ENCODE measurements at regions of chr1 and their contacts with region 1.

Region 1: DNA sequence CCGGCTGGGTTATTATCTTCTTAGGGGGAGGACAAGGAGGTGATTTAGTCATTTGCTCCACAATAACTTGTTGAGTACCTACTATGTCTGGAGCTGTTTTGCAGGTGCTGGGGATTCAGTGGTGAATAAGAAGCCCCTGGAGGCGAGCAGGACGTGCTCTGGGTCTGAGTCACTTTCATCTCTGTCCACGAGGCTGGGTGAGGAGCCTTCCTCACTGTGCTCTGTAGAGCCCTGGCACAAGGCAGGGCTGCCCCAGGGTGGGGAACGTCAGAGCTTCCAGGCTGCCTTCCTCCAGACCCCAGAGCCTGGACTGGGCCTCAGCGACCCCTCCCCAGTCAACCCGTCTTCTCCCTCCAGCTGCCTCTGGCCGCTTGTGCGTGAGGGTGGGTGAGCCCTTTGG is 2.5 kb upstream of the PADI6 start:
- DNase-seq: no peak
- H3K4me3 ChIP-seq: no peak overlapping the region
- H3K27ac ChIP-seq: no peak overlapping the region
- H3K4me1 ChIP-seq: no peaks in the 10 kb centered on the region
- H3K27me3 ChIP-seq: no peaks in the 10 kb centered on the region
- CTCF ChIP-seq: no peak
- POLR2A ChIP-seq: no peak

Region 2: GRCh38 chr1:18175530-18176377 is 806.3 kb after region 1 on chr1:
- intact Hi-C with region 1: loop called (anchors 10 kb)
- DNase-seq: no peak
- H3K4me3 ChIP-seq: no peak overlapping the region
- H3K27ac ChIP-seq: no peak overlapping the region
- H3K4me1 ChIP-seq: no peaks in the 10 kb centered on the region
- H3K27me3 ChIP-seq: no peaks in the 10 kb centered on the region
- CTCF ChIP-seq: no peak
- POLR2A ChIP-seq: no peak